ENCODE measurements at regions of chr5 and their contacts with region 1.

Region 1: DNA sequence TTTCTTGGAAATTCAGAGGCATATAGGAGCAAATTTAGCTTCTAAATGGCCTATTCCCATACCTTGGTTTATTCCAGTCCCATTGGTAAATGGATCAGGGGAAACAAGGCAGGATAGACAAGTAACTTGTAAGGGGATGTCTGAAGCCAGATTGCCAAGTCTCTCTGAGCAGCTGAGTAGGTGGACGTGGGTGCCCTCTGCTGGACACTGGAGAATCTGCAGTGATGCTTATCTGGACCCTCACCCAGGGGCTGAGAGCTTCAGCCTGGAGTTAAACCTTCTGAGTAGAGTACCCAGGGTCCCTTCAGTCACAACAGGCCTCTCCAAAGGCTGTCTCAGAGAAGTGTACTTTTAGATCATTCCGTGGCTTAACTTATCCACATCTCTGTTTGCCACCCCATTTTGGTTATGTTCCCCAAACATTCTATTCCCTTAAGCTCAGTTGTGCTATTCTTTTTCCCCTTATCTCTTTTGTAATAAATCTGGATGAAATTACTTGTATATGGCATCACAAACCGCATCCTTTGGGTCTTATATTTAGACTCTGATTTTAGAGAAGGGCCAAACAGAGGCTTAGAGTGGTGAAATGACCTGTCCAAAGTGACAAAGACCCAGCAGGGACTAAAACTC is 218.3 kb upstream of the GLRA1 start:
- DNase-seq: peak; percentile 44 to 82 (median 59)
- ATAC-seq: peak; percentile 68 to 79
- H3K4me3 ChIP-seq: no peak overlapping the region
- H3K27ac ChIP-seq: no peak overlapping the region
- H3K4me1 ChIP-seq: no peaks in the 10 kb centered on the region
- H3K27me3 ChIP-seq: no peaks in the 10 kb centered on the region

Region 2: DNA sequence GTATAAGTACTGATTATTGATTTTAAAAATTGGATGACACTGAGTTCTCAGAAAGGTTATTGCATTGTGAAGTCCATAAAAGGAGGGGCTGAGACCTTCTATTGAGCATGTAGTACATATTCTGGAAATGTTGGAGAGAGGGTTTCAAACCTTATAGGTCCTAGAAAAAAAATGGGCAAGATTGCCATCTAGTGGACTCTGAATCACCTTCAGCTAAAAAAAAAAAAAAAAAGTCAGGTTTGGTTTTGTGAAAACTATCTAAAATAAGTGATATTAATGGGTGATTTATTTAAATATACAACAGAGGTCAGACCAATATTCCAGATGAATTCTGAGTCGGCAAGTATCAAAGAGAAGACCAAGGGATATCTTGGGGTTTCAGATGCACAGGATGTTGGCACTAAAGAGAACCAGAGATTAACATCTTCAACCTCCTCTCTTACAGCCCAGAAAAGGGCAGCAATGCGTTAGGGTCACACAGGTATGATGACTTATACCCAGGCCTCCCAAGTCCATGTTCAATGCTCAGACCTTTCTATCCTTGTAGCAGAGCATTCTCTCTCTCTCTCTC is 372.0 kb after region 1 on chr5:
- intact Hi-C with region 1: loop called in 1 of 4 experiments (anchors 10 kb)
- DNase-seq: no peak
- ATAC-seq: no peak
- H3K4me3 ChIP-seq: no peak overlapping the region
- H3K27ac ChIP-seq: no peak overlapping the region
- H3K4me1 ChIP-seq: no peaks in the 10 kb centered on the region
- H3K27me3 ChIP-seq: no peaks in the 10 kb centered on the region